HepG2 (cell line): ENCODE measurements at regions of chr12 and their contacts with region 1.

Region 1: DNA sequence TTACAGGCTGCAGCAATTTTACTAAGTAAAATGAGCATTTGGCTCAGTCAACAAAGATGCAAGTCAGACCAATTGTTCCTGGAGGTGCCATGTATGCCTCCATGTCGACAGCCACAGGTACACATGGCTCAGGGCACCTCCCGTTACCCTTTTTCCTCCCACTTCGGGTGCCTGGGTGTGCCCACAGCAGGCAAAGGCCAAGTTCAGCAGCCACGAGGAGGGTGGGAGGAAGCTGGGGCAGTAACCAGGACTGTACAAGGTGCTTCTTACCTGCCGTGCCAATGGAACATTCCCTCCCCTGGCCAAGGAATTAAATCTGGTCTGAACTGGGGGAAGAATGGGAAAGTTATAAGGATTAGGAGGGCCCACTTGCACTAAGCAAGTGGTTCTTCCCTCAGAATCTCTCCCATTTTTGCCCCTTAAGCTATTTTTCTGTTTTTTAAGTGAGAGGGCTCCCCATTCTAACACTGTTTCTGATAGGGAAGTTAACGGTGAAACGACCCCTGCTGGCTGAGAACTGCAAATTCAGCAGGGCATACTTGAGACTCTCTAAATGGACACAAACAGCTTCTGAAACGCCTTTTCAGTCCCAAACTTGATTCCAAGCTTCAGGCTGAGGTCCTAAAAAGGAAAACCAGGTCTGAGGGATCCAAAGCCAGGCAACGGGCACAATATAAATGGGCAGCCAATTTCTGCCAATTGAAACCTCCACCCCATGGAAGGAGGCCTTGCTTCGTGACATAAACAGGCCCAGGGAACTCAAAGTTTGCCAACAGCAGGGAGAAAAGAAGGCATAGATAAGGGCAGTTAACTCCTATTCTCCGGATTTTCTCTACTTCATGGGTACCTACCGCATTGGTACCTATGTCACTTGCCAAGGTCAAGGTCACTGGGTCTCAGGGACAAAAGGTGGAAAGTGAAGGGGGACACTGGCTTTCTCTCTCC is 24.8 kb downstream of the CLECL1 start:
- DNase-seq: peak; percentile 31
- ATAC-seq: peak; percentile 95
- H3K4me3 ChIP-seq: peak overlapping the region in 1 of 3 experiments; percentile 49; a peak in 2 of 6 replicates
- H3K27ac ChIP-seq: no peak overlapping the region
- H3K4me1 ChIP-seq: peaks cover 13% of the 10 kb centered on the region; the same call in 1 of the 2 replicates
- H3K27me3 ChIP-seq: peaks cover 2 to 9% of the 10 kb centered on the region in 2 experiments; a peak in 2 of 5 replicates
- CTCF ChIP-seq: peak; percentile 80
- EP300 ChIP-seq: no peak
- POLR2A ChIP-seq: no peak
- RAD21 ChIP-seq: 0 out of 2 replicates have a peak, but pooled peaks have one; percentile 43

Region 2: GRCh38 chr12:9331218-9331626 is 376.9 kb before region 1 on chr12:
- CTCF ChIA-PET with region 1: interaction called, 4 read pairs
- POLR2A ChIA-PET with region 1: no interaction called
- in situ Hi-C with region 1: no loop called
- intact Hi-C with region 1: loop called (anchors 5 kb)
- DNase-seq: peak; percentile 44
- ATAC-seq: peak; percentile 78
- H3K4me3 ChIP-seq: no peak overlapping the region
- H3K27ac ChIP-seq: no peak overlapping the region
- H3K4me1 ChIP-seq: peaks cover 47% of the 10 kb centered on the region
- H3K27me3 ChIP-seq: no peaks in the 10 kb centered on the region
- CTCF ChIP-seq: peak; percentile 98
- EP300 ChIP-seq: no peak
- POLR2A ChIP-seq: no peak
- RAD21 ChIP-seq: peak; percentile 92

Region 3: DNA sequence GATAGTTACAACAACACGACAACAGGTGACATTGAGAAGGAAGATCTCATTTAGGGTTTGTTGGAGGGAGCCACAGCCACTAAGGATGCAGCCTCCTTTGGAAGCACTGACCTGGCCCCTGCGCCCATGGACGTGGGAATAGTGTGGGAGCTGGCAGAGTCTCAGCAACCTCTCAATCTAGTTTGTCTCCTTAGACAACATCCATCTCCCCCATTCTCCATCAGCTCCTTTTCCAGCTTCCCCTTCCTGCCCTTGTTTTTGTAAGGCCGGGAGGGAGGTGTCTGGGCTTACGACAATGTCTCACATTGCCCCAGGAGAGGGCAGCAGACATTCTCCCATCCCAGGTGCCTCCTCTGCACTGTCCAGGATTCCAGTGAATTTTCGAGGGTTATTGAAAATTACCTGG is 329.7 kb before region 1 on chr12:
- CTCF ChIA-PET with region 1: no interaction called
- POLR2A ChIA-PET with region 1: no interaction called
- in situ Hi-C with region 1: no loop called
- intact Hi-C with region 1: loop called (anchors 5 kb)
- DNase-seq: peak; percentile 50
- ATAC-seq: peak; percentile 95
- H3K4me3 ChIP-seq: no peak overlapping the region
- H3K27ac ChIP-seq: no peak overlapping the region
- H3K4me1 ChIP-seq: peaks cover 35% of the 10 kb centered on the region
- H3K27me3 ChIP-seq: no peaks in the 10 kb centered on the region
- CTCF ChIP-seq: peak; percentile 84
- EP300 ChIP-seq: no peak
- POLR2A ChIP-seq: no peak
- RAD21 ChIP-seq: peak; percentile 65

Region 4: GRCh38 chr12:9634177-9634803 is 73.8 kb before region 1 on chr12:
- CTCF ChIA-PET with region 1: interaction called, 52 read pairs
- POLR2A ChIA-PET with region 1: no interaction called
- in situ Hi-C with region 1: no loop called
- intact Hi-C with region 1: loop called (anchors 1 kb)
- DNase-seq: peak; percentile 49
- ATAC-seq: peak; percentile 62; the same call in 2 of the 3 replicates
- H3K4me3 ChIP-seq: no peak overlapping the region
- H3K27ac ChIP-seq: no peak overlapping the region
- H3K4me1 ChIP-seq: no peaks in the 10 kb centered on the region
- H3K27me3 ChIP-seq: no peaks in the 10 kb centered on the region
- CTCF ChIP-seq: peak; percentile 79
- EP300 ChIP-seq: no peak
- POLR2A ChIP-seq: no peak
- RAD21 ChIP-seq: peak; percentile 46

Region 5: GRCh38 chr12:9647825-9648700 is 60.1 kb before region 1 on chr12:
- CTCF ChIA-PET with region 1: no interaction called
- POLR2A ChIA-PET with region 1: no interaction called
- in situ Hi-C with region 1: loop called (anchors 5 kb)
- intact Hi-C with region 1: no loop called
- DNase-seq: peak; percentile 74
- ATAC-seq: peak; percentile 92
- H3K4me3 ChIP-seq: peak overlapping the region; percentile 72 to 92 (median 86)
- H3K27ac ChIP-seq: peak overlapping the region; percentile 82
- H3K4me1 ChIP-seq: peaks cover 39% of the 10 kb centered on the region
- H3K27me3 ChIP-seq: no peaks in the 10 kb centered on the region; a peak in 1 of 5 replicates
- CTCF ChIP-seq: peak; percentile 15; the same call in 1 of the 2 replicates
- EP300 ChIP-seq: no peak
- POLR2A ChIP-seq: peak; percentile 27 to 65
- RAD21 ChIP-seq: no peak